ENCODE measurements at regions of chr1 and their contacts with region 1.

Region 1: DNA sequence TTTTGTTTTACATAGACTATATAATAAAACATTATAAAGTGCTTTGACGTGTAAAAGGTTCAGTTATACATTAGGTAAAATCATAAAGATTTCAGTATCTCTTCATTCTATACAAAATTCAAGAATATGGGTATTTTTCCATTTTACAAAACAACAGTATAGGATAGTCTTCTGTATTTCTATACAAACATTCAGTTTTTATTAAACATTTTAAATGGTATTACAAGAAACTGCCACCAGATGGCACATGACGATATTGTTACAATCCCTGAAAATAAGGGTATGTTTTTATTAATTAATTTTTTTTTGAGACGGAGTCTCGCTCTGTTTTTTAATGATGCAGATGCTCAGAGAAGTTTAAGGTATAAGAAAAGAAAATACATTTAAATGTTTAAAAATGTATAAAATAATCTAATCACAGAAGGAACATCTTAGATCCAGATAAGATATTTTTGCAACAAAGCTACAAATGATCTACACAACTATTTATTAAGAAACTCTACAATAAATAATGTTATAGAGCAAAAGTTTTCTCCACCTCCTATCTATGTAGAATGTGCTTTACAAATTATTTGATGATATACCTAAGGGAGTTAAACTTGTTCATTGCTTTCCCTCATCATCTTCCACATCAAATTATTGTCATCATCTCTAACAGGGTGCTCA is 23.5 kb upstream of the RSBN1 start:
- DNase-seq: peak in 4 of 14 experiments; percentile 48 to 80 (median 74)
- ATAC-seq: peak; percentile 57
- H3K4me3 ChIP-seq: no peak overlapping the region
- H3K4me3 Mint-ChIP-seq: no peak overlapping the region
- H3K27ac ChIP-seq: no peak overlapping the region
- H3K27ac Mint-ChIP-seq: no peak overlapping the region
- H3K4me1 ChIP-seq: no peaks in the 10 kb centered on the region
- H3K4me1 Mint-ChIP-seq: peaks cover 11% of the 10 kb centered on the region
- H3K27me3 ChIP-seq: no peaks in the 10 kb centered on the region
- H3K27me3 Mint-ChIP-seq: no peaks in the 10 kb centered on the region
- CTCF ChIP-seq: peak; percentile 86

Region 2: GRCh38 chr1:113133038-113133437 is 702.7 kb before region 1 on chr1:
- CTCF ChIA-PET with region 1: no interaction called
- POLR2A ChIA-PET with region 1: no interaction called
- intact Hi-C with region 1: loop called in 1 of 2 experiments (anchors 10 kb)
- DNase-seq: peak in 2 of 14 experiments; percentile 41 to 57
- ATAC-seq: no peak
- H3K4me3 ChIP-seq: no peak overlapping the region
- H3K4me3 Mint-ChIP-seq: no peak overlapping the region
- H3K27ac ChIP-seq: no peak overlapping the region
- H3K27ac Mint-ChIP-seq: no peak overlapping the region
- H3K4me1 ChIP-seq: no peaks in the 10 kb centered on the region
- H3K4me1 Mint-ChIP-seq: peaks cover 21% of the 10 kb centered on the region
- H3K27me3 ChIP-seq: no peaks in the 10 kb centered on the region
- H3K27me3 Mint-ChIP-seq: no peaks in the 10 kb centered on the region
- CTCF ChIP-seq: no peak

Region 3: GRCh38 chr1:113904674-113905434 is 69.1 kb after region 1 on chr1 and contains the starts of genes AP4B1 and DCLRE1B:
- CTCF ChIA-PET with region 1: interaction called, 31 read pairs
- POLR2A ChIA-PET with region 1: interaction called, 24 read pairs
- intact Hi-C with region 1: loop called (anchors 1 kb)
- DNase-seq: peak; percentile 89 to 100 (median 94)
- ATAC-seq: peak; percentile 92
- H3K4me3 ChIP-seq: peak within 1 kb of the TSS; percentile 96
- H3K4me3 Mint-ChIP-seq: peak within 1 kb of the TSS; percentile 99
- H3K27ac ChIP-seq: peak within 1 kb of the TSS; percentile 86 to 89
- H3K27ac Mint-ChIP-seq: peak within 1 kb of the TSS; percentile 98
- H3K4me1 ChIP-seq: peaks cover 46% of the 10 kb centered on the region
- H3K4me1 Mint-ChIP-seq: peaks cover 52% of the 10 kb centered on the region
- H3K27me3 ChIP-seq: no peaks in the 10 kb centered on the region
- H3K27me3 Mint-ChIP-seq: no peaks in the 10 kb centered on the region
- CTCF ChIP-seq: peak; percentile 73
- total RNA-seq, gene AP4B1: 44.1 to 48.0 TPM
- total RNA-seq, gene DCLRE1B: 6.4 to 6.8 TPM

Region 4: GRCh38 chr1:113949007-113949406 is 113.2 kb after region 1 on chr1:
- CTCF ChIA-PET with region 1: no interaction called
- POLR2A ChIA-PET with region 1: no interaction called
- intact Hi-C with region 1: loop called in 1 of 2 experiments (anchors 5 kb)
- DNase-seq: peak in 2 of 14 experiments; percentile 58 to 63
- ATAC-seq: no peak
- H3K4me3 ChIP-seq: no peak overlapping the region
- H3K4me3 Mint-ChIP-seq: peak overlapping the region; percentile 51
- H3K27ac ChIP-seq: peak overlapping the region; percentile 60 to 66
- H3K27ac Mint-ChIP-seq: peak overlapping the region; percentile 89
- H3K4me1 ChIP-seq: peaks cover 50% of the 10 kb centered on the region
- H3K4me1 Mint-ChIP-seq: peaks cover 92% of the 10 kb centered on the region
- H3K27me3 ChIP-seq: no peaks in the 10 kb centered on the region
- H3K27me3 Mint-ChIP-seq: no peaks in the 10 kb centered on the region
- CTCF ChIP-seq: peak; percentile 43

Region 5: DNA sequence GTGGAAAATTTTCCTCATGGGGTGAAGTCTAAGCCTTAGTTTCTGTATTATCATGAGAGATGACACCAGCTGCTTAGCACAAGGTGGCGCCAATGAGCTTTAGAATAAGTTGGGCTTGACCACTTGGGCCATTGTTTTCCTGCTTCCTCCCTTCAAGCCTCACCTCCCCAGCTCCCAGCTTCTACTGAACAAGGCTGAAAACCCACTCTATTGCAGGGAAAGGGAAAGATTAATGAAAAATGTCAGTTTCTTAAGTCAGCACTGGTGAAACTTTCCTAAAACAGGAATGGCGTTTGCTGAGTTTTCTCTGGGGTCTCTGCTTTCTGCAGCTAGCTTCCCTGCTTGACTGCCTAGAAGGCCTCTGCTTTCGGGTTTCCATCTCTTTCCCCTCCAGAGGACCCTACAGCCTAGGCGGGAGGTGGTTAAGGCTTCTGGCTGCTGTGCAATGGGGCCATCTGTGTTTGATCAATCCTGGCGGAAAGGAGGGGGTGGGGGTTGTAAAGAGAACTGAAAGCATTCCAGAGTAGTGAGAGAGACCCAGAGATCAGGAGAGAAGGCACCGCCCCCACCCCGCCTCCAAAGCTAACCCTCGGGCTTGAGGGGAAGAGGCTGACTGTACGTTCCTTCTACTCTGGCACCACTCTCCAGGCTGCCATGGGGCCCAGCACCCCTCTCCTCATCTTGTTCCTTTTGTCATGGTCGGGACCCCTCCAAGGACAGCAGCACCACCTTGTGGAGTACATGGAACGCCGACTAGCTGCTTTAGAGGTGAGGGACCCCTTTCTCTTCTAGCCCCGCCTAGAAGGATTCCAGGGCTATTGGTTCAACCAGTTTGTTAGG is 143.3 kb after region 1 on chr1 and contains the start of gene OLFML3:
- CTCF ChIA-PET with region 1: interaction called, 3 read pairs
- POLR2A ChIA-PET with region 1: no interaction called
- intact Hi-C with region 1: loop called in 1 of 2 experiments (anchors 5 kb)
- DNase-seq: peak in 9 of 14 experiments; percentile 10 to 68 (median 36)
- ATAC-seq: no peak
- H3K4me3 ChIP-seq: no peak within 1 kb of the TSS
- H3K4me3 Mint-ChIP-seq: no peak within 1 kb of the TSS
- H3K27ac ChIP-seq: no peak within 1 kb of the TSS
- H3K27ac Mint-ChIP-seq: peak within 1 kb of the TSS; percentile 66
- H3K4me1 ChIP-seq: peaks cover 13% of the 10 kb centered on the region
- H3K4me1 Mint-ChIP-seq: peaks cover 46% of the 10 kb centered on the region
- H3K27me3 ChIP-seq: no peaks in the 10 kb centered on the region
- H3K27me3 Mint-ChIP-seq: no peaks in the 10 kb centered on the region
- CTCF ChIP-seq: peak; percentile 51
- total RNA-seq, gene OLFML3: 0.30 to 0.31 TPM

Measured in CD4-positive, alpha-beta T cell (primary cell).